Endothelial cell of umbilical vein (primary cell): ENCODE measurements at regions of chr9 and their contacts with region 1.

Region 1: DNA sequence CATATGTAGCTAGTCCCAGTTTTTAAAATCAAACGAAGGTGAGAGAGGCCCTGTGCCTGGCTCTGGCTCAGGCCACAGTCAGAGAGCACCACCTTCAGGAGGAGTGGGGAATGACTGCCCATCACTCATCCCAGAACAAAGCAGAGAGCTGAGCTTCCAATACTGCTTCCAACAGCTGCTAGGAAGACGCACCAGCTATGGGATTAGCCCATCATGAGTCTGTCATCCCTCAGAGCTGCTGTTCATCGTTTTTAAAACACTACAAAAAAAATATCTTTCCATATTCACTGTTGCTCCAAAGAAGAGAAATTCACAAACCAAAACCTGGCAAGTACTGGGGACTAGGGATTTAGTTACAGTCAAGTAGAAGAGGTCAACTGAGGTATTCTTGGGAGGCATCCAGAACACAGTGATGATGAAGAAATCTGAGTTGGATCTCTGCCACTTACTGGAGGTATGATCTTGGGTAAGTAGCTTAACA is 102.4 kb downstream of the CDK5RAP2 start:
- DNase-seq: peak; percentile 69
- H3K4me3 ChIP-seq: no peak overlapping the region
- H3K27ac ChIP-seq: no peak overlapping the region
- H3K4me1 ChIP-seq: peaks cover 5% of the 10 kb centered on the region
- H3K27me3 ChIP-seq: no peaks in the 10 kb centered on the region
- CTCF ChIP-seq: peak; percentile 91
- POLR2A ChIP-seq: no peak

Region 2: GRCh38 chr9:119289740-119290433 is 1187.7 kb before region 1 on chr9:
- CTCF ChIA-PET with region 1: no interaction called
- POLR2A ChIA-PET with region 1: no interaction called
- dilution Hi-C with region 1: no loop called
- intact Hi-C with region 1: loop called (anchors 5 kb)
- DNase-seq: peak; percentile 26
- H3K4me3 ChIP-seq: no peak overlapping the region
- H3K27ac ChIP-seq: no peak overlapping the region
- H3K4me1 ChIP-seq: no peaks in the 10 kb centered on the region
- H3K27me3 ChIP-seq: no peaks in the 10 kb centered on the region
- CTCF ChIP-seq: peak; percentile 45 to 47
- POLR2A ChIP-seq: no peak

Region 3: GRCh38 chr9:119556129-119556875 is 921.3 kb before region 1 on chr9:
- CTCF ChIA-PET with region 1: interaction called, 61 read pairs
- POLR2A ChIA-PET with region 1: no interaction called
- dilution Hi-C with region 1: no loop called
- intact Hi-C with region 1: loop called (anchors 1 kb)
- DNase-seq: peak; percentile 80
- H3K4me3 ChIP-seq: peak overlapping the region in 2 of 3 experiments; percentile 15 to 30
- H3K27ac ChIP-seq: no peak overlapping the region
- H3K4me1 ChIP-seq: peaks cover 5% of the 10 kb centered on the region
- H3K27me3 ChIP-seq: no peaks in the 10 kb centered on the region
- CTCF ChIP-seq: peak; percentile 88 to 96
- POLR2A ChIP-seq: no peak

Region 4: GRCh38 chr9:120348951-120349429 is 128.6 kb before region 1 on chr9:
- CTCF ChIA-PET with region 1: interaction called, 21 read pairs
- POLR2A ChIA-PET with region 1: no interaction called
- dilution Hi-C with region 1: no loop called
- intact Hi-C with region 1: loop called (anchors 1 kb)
- DNase-seq: peak; percentile 39
- H3K4me3 ChIP-seq: no peak overlapping the region
- H3K27ac ChIP-seq: no peak overlapping the region
- H3K4me1 ChIP-seq: no peaks in the 10 kb centered on the region
- H3K27me3 ChIP-seq: no peaks in the 10 kb centered on the region
- CTCF ChIP-seq: peak; percentile 48 to 73
- POLR2A ChIP-seq: no peak

Region 5: DNA sequence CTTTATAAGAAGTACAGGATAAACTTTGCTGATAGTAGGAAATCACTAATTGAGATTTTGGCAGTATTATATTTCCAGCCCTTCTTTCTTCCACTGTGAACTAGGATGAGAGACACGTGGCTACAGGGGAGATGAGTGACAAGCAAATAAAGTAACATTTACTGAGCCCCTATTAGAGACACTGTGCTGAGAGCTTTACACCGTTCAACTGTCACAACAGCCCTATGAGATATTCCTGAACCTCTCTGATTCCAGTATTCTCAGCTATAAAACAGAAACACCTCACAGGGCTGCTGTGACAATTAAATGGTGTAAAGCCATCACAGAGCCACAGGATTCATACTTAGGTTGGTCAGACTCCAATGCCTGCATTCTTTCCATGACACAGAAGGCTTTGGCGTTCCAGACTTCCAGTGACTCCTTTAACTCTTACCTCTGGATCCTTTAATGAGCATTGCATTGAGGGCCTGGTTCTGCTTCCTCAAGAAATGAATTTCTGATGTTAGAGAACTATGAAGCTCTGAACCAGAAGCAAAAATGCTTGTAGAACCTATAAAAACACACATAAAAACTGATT is 66.5 kb before region 1 on chr9:
- CTCF ChIA-PET with region 1: interaction called, 10 read pairs
- POLR2A ChIA-PET with region 1: no interaction called
- dilution Hi-C with region 1: no loop called
- intact Hi-C with region 1: no loop called
- DNase-seq: no peak
- H3K4me3 ChIP-seq: no peak overlapping the region
- H3K27ac ChIP-seq: no peak overlapping the region
- H3K4me1 ChIP-seq: no peaks in the 10 kb centered on the region
- H3K27me3 ChIP-seq: no peaks in the 10 kb centered on the region
- CTCF ChIP-seq: no peak
- POLR2A ChIP-seq: no peak

Region 6: DNA sequence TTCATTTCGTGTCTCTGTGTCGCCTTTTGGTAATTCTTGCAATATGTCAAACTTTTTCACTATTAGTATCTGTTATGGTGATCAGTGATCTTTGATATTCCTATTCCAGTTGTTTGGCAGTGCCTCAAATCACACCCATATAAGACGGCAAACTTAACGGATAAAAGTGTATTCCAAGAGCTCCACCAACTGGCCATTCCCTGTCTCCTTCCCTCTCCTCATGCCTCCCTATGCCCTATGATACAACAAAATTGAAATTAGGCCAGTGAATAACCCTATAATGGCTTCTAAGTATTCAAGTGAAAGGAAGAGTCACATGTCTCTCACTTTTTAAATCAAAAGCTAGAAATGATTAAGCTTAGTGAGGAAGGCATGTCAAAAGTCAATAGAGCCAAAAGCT is 27.6 kb after region 1 on chr9:
- CTCF ChIA-PET with region 1: interaction called, 10 read pairs
- POLR2A ChIA-PET with region 1: no interaction called
- dilution Hi-C with region 1: no loop called
- intact Hi-C with region 1: no loop called
- DNase-seq: no peak
- H3K4me3 ChIP-seq: no peak overlapping the region
- H3K27ac ChIP-seq: no peak overlapping the region
- H3K4me1 ChIP-seq: no peaks in the 10 kb centered on the region
- H3K27me3 ChIP-seq: no peaks in the 10 kb centered on the region
- CTCF ChIP-seq: no peak
- POLR2A ChIP-seq: no peak

Region 7: GRCh38 chr9:120755827-120756434 is 278.4 kb after region 1 on chr9:
- CTCF ChIA-PET with region 1: no interaction called
- POLR2A ChIA-PET with region 1: no interaction called
- dilution Hi-C with region 1: no loop called
- intact Hi-C with region 1: no loop called
- DNase-seq: peak; percentile 65
- H3K4me3 ChIP-seq: no peak overlapping the region
- H3K27ac ChIP-seq: no peak overlapping the region
- H3K4me1 ChIP-seq: no peaks in the 10 kb centered on the region
- H3K27me3 ChIP-seq: no peaks in the 10 kb centered on the region
- CTCF ChIP-seq: peak; percentile 70 to 74
- POLR2A ChIP-seq: no peak